ENCODE measurements at regions of chr14 and their contacts with region 1.

Region 1: DNA sequence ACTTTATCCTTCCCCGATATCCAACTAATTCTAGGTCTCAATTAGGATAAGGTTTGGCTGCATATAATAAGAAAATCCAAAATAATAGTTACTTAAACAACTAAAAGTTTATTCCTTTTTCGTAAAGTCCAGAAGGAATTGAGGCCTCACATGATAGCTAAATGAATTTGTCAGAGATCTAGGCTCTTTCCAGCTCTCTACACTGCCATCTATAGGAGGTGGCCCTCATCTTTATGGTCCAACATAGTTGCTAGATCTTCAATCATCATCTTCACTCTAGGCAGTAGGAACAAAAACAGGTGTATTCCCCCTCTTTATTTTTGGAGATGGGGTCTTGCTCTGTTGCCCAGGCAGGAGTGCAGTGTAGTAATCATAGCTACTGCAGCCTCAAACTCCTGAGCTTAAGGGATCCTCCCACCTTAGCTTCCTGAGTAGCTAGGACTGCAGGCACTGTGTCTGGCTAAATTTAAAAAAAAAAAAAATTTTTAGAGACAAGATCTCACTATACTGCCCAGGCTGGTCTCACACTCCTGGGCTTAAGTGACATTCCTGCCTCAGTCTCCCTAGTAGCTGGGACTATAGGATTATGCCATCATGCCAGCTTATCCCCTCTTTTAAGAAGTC is 46.5 kb upstream of the SAV1 start:
- DNase-seq: peak; percentile 55 to 76 (median 69)
- H3K4me3 ChIP-seq: no peak overlapping the region
- H3K27ac ChIP-seq: no peak overlapping the region
- H3K4me1 ChIP-seq: no peaks in the 10 kb centered on the region
- H3K27me3 ChIP-seq: no peaks in the 10 kb centered on the region

Region 2: DNA sequence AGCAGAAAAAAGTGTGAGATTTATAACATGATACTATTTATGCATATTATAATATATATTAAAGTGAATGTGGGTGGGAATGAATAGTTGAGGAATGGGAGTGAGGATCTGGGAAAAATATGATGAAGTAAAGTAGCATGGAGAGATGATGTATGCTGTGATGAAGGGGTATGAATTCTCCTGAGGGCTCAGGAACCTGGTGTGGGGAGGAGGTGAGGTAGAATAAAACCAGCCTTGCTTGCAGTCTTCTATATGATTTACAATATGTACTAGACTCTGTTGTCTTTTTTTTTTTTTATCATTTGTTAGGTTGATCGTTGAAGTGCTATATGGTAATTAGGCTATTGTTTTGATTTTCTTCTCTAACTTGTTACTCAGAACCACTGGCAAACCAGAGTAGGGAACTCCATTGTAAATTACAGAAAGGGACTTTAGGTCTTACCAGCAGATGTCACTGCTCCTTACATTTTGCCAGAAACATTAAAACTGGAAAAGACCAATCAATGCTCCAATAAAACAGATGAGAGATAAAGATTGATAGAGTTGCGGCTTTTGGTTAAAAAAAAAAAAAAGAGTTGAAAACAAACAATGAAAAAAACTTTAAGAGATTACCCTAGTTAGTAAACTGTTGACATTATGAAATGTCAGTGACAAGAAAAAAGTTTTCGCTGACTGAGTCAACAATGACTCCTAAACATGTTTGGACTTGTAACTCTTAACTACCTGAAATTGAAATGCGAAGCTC is 114.7 kb before region 1 on chr14:
- CTCF ChIA-PET with region 1: interaction called, 24 read pairs
- POLR2A ChIA-PET with region 1: interaction called, 7 read pairs
- DNase-seq: peak; percentile 44 to 52 (median 48)
- H3K4me3 ChIP-seq: no peak overlapping the region
- H3K27ac ChIP-seq: no peak overlapping the region
- H3K4me1 ChIP-seq: peaks cover 0 to 1% (median 0%) of the 10 kb centered on the region in 4 experiments
- H3K27me3 ChIP-seq: no peaks in the 10 kb centered on the region

Region 3: GRCh38 chr14:50619556-50620141 is 94.9 kb before region 1 on chr14:
- CTCF ChIA-PET with region 1: interaction called, 31 read pairs
- POLR2A ChIA-PET with region 1: no interaction called
- DNase-seq: peak; percentile 44 to 65 (median 59)
- H3K4me3 ChIP-seq: no peak overlapping the region
- H3K27ac ChIP-seq: no peak overlapping the region
- H3K4me1 ChIP-seq: no peaks in the 10 kb centered on the region
- H3K27me3 ChIP-seq: no peaks in the 10 kb centered on the region

Region 4: DNA sequence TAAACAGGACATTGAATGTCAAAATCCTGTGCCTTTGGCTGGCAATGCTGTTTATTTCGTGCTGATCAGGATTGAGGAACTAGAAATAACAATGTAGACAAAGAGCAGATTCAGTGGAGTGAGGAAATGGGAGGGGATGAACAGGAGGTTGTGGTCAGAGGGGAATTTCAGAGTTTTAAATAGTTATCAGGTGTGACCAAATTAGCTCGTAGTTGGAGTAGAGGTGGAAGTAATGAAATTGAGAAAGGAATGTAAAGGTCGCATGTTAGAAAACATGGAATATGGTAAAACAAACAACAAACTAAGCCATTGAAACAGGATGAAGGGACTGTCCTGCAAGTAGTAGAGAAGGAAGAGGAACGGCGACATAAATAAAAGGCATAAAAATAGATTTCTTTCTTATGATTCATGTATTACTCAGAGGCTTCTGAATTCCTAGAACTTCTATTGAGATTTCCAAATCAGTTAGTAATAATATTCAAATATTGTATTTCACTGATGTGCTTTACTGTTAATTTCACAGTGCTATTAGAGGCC is 37.0 kb before region 1 on chr14:
- CTCF ChIA-PET with region 1: interaction called, 11 read pairs
- POLR2A ChIA-PET with region 1: no interaction called
- DNase-seq: peak; percentile 31 to 60 (median 54)
- H3K4me3 ChIP-seq: peak overlapping the region in 5 of 7 experiments; percentile 13 to 56 (median 42)
- H3K27ac ChIP-seq: peak overlapping the region in 1 of 2 experiments; percentile 5
- H3K4me1 ChIP-seq: peaks cover 8 to 27% (median 16%) of the 10 kb centered on the region in 4 experiments
- H3K27me3 ChIP-seq: no peaks in the 10 kb centered on the region

Region 5: GRCh38 chr14:50704454-50705010 is 10.0 kb before region 1 on chr14:
- CTCF ChIA-PET with region 1: interaction called, 10 read pairs
- POLR2A ChIA-PET with region 1: no interaction called
- DNase-seq: no peak
- H3K4me3 ChIP-seq: no peak overlapping the region
- H3K27ac ChIP-seq: no peak overlapping the region
- H3K4me1 ChIP-seq: no peaks in the 10 kb centered on the region
- H3K27me3 ChIP-seq: no peaks in the 10 kb centered on the region

Region 6: DNA sequence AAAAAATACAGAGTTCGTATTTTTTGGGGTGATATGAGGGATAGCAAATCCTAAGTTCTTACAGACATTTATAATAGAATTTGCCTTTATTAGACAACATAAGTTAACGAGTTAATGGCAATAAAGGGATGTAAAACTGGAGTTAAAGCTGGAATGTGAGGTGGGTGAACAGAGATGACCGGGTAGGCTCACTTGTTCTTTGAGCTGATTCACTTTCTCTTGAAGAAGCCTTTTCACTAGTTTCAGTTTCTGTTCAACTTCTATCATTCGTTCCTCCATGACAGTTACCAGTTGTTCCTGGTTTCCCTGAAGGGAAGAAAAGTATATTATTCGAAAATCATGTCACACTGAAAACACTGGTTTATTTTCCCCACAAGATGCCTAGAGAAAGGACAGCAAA is 11.2 kb after region 1 on chr14:
- CTCF ChIA-PET with region 1: interaction called, 13 read pairs
- POLR2A ChIA-PET with region 1: no interaction called
- DNase-seq: no peak
- H3K4me3 ChIP-seq: no peak overlapping the region
- H3K27ac ChIP-seq: no peak overlapping the region
- H3K4me1 ChIP-seq: no peaks in the 10 kb centered on the region
- H3K27me3 ChIP-seq: no peaks in the 10 kb centered on the region

Region 7: GRCh38 chr14:50783563-50783962 is 69.0 kb after region 1 on chr14:
- CTCF ChIA-PET with region 1: no interaction called
- POLR2A ChIA-PET with region 1: no interaction called
- DNase-seq: no peak
- H3K4me3 ChIP-seq: no peak overlapping the region
- H3K27ac ChIP-seq: no peak overlapping the region
- H3K4me1 ChIP-seq: peaks cover 17 to 45% (median 27%) of the 10 kb centered on the region in 4 experiments
- H3K27me3 ChIP-seq: no peaks in the 10 kb centered on the region